Activated CD4-positive, alpha-beta T cell treated with anti-CD3 and anti-CD28 coated beads for 36 hours (primary cell): ENCODE measurements at regions of chr20 and their contacts with region 1.

Region 1: GRCh38 chr20:48904365-48905296 is 16.9 kb upstream of the ARFGEF2 start:
- DNase-seq: peak; percentile 84
- ATAC-seq: peak; percentile 47
- H3K4me3 Mint-ChIP-seq: no peak overlapping the region
- H3K27ac Mint-ChIP-seq: peak overlapping the region; percentile 65
- H3K4me1 Mint-ChIP-seq: peaks cover 17% of the 10 kb centered on the region
- H3K27me3 Mint-ChIP-seq: peaks cover 2% of the 10 kb centered on the region

Region 2: DNA sequence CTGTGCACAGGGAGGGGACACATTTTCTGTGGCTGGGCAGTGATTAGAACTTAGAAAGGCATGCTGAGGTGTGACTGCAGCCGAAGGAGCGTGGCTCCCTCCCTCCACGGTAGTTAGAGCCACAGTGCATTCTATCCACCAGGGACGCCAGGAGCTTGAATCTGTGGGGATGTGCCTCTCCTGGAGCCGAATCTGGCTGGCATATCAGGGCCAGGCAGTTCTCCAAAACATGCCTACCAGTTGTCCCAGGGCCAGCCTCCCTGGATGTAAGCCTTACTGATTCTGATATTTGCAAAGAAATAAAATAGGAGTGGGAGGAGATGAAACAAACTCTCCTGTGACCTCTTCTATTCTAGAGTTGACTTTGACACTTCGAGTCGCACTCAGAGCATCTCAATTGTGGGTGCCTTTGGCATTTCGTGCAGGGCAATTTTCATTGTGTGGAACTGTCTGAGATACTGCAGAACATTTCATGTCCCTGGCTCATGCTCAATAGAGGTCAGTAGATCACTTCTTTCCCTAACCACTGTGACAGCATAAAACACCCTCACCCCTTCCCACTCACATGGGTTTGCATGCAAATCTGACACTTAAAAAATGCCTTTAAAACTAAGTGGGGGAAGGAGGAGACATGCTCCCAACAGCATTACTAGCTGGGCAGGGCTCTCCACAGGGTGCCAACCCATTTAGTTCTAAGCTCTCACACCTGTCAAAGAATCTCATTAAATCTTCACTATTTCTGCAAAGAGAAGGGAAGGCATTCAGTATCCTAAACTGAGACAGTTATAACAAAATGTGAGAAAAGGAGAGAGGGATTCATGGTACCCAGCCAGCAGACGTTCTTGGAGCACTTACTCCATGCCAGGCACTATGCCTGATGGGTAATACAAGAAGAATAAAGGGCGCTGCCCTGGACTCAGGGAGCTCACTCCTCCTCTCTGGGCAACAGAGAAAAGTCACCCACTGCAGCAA is 455.7 kb before region 1 on chr20:
- CTCF ChIA-PET with region 1: no interaction called
- POLR2A ChIA-PET with region 1: no interaction called
- intact Hi-C with region 1: no loop called
- DNase-seq: no peak
- ATAC-seq: no peak
- H3K4me3 Mint-ChIP-seq: no peak overlapping the region
- H3K27ac Mint-ChIP-seq: no peak overlapping the region
- H3K4me1 Mint-ChIP-seq: no peaks in the 10 kb centered on the region
- H3K27me3 Mint-ChIP-seq: peaks cover 7% of the 10 kb centered on the region

Region 3: DNA sequence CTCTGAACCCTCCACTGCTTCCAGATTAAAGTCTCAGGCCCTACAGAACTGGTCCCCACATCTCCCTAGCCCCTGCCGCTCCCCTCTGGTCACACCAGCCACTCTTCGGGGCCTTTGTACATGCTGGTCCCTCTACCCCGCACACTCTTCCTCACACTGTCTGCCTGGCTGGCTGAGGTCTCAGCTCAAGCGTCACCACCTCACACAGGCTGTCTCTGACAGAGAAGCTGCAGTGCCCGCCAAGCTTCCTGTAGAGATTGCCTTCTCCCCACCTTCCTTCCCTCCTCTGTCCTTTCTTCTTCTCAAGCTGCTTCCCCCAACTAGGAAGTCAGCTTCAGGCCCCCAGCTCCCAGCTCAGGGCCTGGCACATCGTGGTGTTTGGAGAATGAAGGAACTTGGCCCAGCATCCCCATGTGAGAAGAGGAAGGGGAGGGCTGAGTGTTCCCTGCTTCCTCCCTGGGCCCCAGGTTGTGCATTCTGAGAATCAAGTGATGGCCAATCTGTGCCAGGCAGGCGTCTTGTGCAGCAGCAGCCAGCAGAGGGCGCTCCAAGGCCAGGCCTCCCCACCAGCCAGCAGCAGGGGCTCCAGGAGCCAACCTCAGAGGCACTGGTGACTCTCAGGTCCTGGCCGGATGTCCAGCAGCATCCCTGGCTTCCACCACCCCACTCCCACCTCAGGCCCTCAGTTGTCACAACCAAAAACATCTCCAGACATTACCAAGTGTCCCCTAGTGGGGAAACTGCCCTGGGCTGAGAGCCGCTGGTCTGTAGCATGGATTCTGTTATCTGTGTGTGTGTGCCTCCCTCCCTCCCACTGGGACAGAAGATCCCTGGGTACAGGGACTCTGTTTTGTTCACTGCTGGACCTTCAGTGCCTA is 269.0 kb before region 1 on chr20:
- CTCF ChIA-PET with region 1: interaction called, 8 read pairs
- POLR2A ChIA-PET with region 1: no interaction called
- intact Hi-C with region 1: loop called (anchors 1 to 2 kb)
- DNase-seq: peak; percentile 86
- ATAC-seq: peak; percentile 84
- H3K4me3 Mint-ChIP-seq: no peak overlapping the region
- H3K27ac Mint-ChIP-seq: peak overlapping the region; percentile 20
- H3K4me1 Mint-ChIP-seq: peaks cover 2% of the 10 kb centered on the region
- H3K27me3 Mint-ChIP-seq: no peaks in the 10 kb centered on the region

Region 4: DNA sequence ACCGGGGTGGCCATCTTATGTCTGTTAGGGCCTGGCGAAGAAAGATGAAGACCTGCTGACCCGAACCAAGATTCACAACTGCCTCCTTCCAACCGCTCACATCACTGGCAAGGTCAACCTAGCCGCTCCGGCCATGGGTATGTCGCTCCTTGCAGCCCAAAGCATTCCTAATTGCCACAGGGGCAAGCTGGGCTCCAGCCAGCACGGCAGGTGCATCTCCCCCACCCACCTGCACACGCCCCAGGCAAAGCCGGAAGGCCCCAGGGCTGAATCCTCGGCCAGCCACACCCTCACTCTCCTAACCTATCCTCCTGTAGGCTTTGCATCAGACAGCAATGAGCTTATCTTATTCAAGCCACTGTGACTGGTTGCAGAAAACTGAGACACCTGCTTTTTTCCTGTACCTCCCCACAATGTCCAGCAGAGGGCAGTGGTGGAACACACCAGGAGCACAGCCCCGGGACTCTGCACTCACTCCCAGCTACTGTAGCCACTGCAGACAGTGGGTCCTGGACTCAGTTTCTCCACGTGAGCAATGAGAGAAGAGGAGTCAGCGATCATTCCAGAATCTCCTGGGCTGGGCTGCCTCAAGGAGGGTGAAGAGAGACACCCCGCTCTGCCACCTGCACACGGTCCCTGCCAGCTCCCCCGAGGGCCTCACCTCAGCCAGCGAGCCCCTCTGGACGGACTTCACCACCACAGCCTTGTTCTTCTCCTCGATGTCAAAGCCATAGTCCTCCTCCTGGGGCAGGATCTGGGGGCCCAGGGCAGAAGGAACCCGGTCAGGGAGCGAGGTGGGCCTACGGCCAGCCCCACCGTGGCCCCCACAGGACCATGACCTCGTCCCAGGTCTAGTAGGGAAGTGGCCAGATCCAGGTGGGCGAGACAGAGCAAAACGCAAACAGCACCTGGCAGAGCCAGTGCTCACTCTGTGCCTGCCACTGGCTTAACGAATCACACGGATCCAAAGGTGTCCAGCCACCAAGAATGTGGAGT is 246.9 kb before region 1 on chr20:
- CTCF ChIA-PET with region 1: interaction called, 134 read pairs
- POLR2A ChIA-PET with region 1: no interaction called
- intact Hi-C with region 1: loop called (anchors 1 kb)
- DNase-seq: peak; percentile 76
- ATAC-seq: peak; percentile 94
- H3K4me3 Mint-ChIP-seq: no peak overlapping the region
- H3K27ac Mint-ChIP-seq: no peak overlapping the region
- H3K4me1 Mint-ChIP-seq: no peaks in the 10 kb centered on the region
- H3K27me3 Mint-ChIP-seq: no peaks in the 10 kb centered on the region